B cell (primary cell): ENCODE measurements at regions of chr22 and their contacts with region 1.

Region 1: GRCh38 chr22:46355371-46355995 is 20.0 kb downstream of the TRMU start:
- DNase-seq: peak; percentile 81
- ATAC-seq: peak; percentile 48
- H3K4me3 ChIP-seq: no peak overlapping the region
- H3K4me3 Mint-ChIP-seq: no peak overlapping the region
- H3K27ac ChIP-seq: no peak overlapping the region
- H3K27ac Mint-ChIP-seq: peak overlapping the region; percentile 65
- H3K4me1 ChIP-seq: peaks cover 0 to 30% of the 10 kb centered on the region in 2 donors
- H3K4me1 Mint-ChIP-seq: peaks cover 10% of the 10 kb centered on the region
- H3K27me3 ChIP-seq: no peaks in the 10 kb centered on the region
- H3K27me3 Mint-ChIP-seq: no peaks in the 10 kb centered on the region
- CTCF ChIP-seq: peak; percentile 87

Region 2: GRCh38 chr22:46250035-46250782 is 105.3 kb before region 1 on chr22 and contains the start of gene CDPF1:
- CTCF ChIA-PET with region 1: no interaction called
- POLR2A ChIA-PET with region 1: no interaction called
- intact Hi-C with region 1: no loop called
- DNase-seq: peak; percentile 91
- ATAC-seq: peak; percentile 96
- H3K4me3 ChIP-seq: peak within 1 kb of the TSS in 4 of 5 experiments; percentile 72 to 85 (median 82)
- H3K4me3 Mint-ChIP-seq: peak within 1 kb of the TSS; percentile 87
- H3K27ac ChIP-seq: peak within 1 kb of the TSS; percentile 35 to 75
- H3K27ac Mint-ChIP-seq: peak within 1 kb of the TSS; percentile 80
- H3K4me1 ChIP-seq: peaks cover 14% of the 10 kb centered on the region in 2 donors
- H3K4me1 Mint-ChIP-seq: peaks cover 18% of the 10 kb centered on the region
- H3K27me3 ChIP-seq: no peaks in the 10 kb centered on the region
- H3K27me3 Mint-ChIP-seq: no peaks in the 10 kb centered on the region
- CTCF ChIP-seq: no peak
- total RNA-seq, gene CDPF1: 9.8 TPM in 2 replicates

Region 3: GRCh38 chr22:46297151-46297812 is 58.2 kb before region 1 on chr22:
- CTCF ChIA-PET with region 1: no interaction called
- POLR2A ChIA-PET with region 1: no interaction called
- intact Hi-C with region 1: no loop called
- DNase-seq: no peak
- ATAC-seq: no peak
- H3K4me3 ChIP-seq: peak overlapping the region in 4 of 5 experiments; percentile 53 to 76 (median 67)
- H3K4me3 Mint-ChIP-seq: peak overlapping the region; percentile 85
- H3K27ac ChIP-seq: no peak overlapping the region
- H3K27ac Mint-ChIP-seq: no peak overlapping the region
- H3K4me1 ChIP-seq: peaks cover 28 to 37% of the 10 kb centered on the region in 2 donors
- H3K4me1 Mint-ChIP-seq: peaks cover 39% of the 10 kb centered on the region
- H3K27me3 ChIP-seq: peaks cover 0 to 5% (median 2%) of the 10 kb centered on the region in 4 experiments
- H3K27me3 Mint-ChIP-seq: no peaks in the 10 kb centered on the region
- CTCF ChIP-seq: no peak

Region 4: GRCh38 chr22:46542011-46542985 is 186.8 kb after region 1 on chr22:
- CTCF ChIA-PET with region 1: interaction called, 56 read pairs
- POLR2A ChIA-PET with region 1: interaction called, 3 read pairs
- intact Hi-C with region 1: loop called (anchors 1 kb)
- DNase-seq: peak; percentile 85
- ATAC-seq: peak; percentile 99
- H3K4me3 ChIP-seq: no peak overlapping the region
- H3K4me3 Mint-ChIP-seq: no peak overlapping the region
- H3K27ac ChIP-seq: no peak overlapping the region
- H3K27ac Mint-ChIP-seq: no peak overlapping the region
- H3K4me1 ChIP-seq: peaks cover 11 to 18% of the 10 kb centered on the region in 2 donors
- H3K4me1 Mint-ChIP-seq: peaks cover 14% of the 10 kb centered on the region
- H3K27me3 ChIP-seq: peaks cover 0 to 43% (median 14%) of the 10 kb centered on the region in 4 experiments
- H3K27me3 Mint-ChIP-seq: peaks cover 44% of the 10 kb centered on the region
- CTCF ChIP-seq: peak; percentile 95

Region 5: GRCh38 chr22:46681010-46681409 is 325.5 kb after region 1 on chr22:
- CTCF ChIA-PET with region 1: no interaction called
- POLR2A ChIA-PET with region 1: no interaction called
- intact Hi-C with region 1: loop called (anchors 10 kb)
- DNase-seq: peak; percentile 50
- ATAC-seq: no peak
- H3K4me3 ChIP-seq: no peak overlapping the region
- H3K4me3 Mint-ChIP-seq: no peak overlapping the region
- H3K27ac ChIP-seq: no peak overlapping the region
- H3K27ac Mint-ChIP-seq: no peak overlapping the region
- H3K4me1 ChIP-seq: peaks cover 30 to 34% of the 10 kb centered on the region in 2 donors
- H3K4me1 Mint-ChIP-seq: peaks cover 29% of the 10 kb centered on the region
- H3K27me3 ChIP-seq: peaks cover 0 to 20% (median 0%) of the 10 kb centered on the region in 4 experiments
- H3K27me3 Mint-ChIP-seq: peaks cover 4% of the 10 kb centered on the region
- CTCF ChIP-seq: peak; percentile 47